Heart right ventricle (tissue), 16 donors: ENCODE measurements at regions of chr16 and their contacts with region 1.

Region 1: GRCh38 chr16:6232056-6232455 is 1100.6 kb upstream of the RBFOX1 start:
- DNase-seq: no peak
- ATAC-seq: no peak
- H3K4me3 ChIP-seq: no peak overlapping the region
- H3K27ac ChIP-seq: no peak overlapping the region
- H3K4me1 ChIP-seq: no peaks in the 10 kb centered on the region
- H3K27me3 ChIP-seq: no peaks in the 10 kb centered on the region
- CTCF ChIP-seq: no peak

Region 2: GRCh38 chr16:6206080-6206479 is 26.0 kb before region 1 on chr16:
- intact Hi-C with region 1: loop called in 1 of 10 experiments (anchors 1 kb)
- DNase-seq: no peak
- ATAC-seq: no peak
- H3K4me3 ChIP-seq: no peak overlapping the region
- H3K27ac ChIP-seq: no peak overlapping the region
- H3K4me1 ChIP-seq: no peaks in the 10 kb centered on the region
- H3K27me3 ChIP-seq: no peaks in the 10 kb centered on the region
- CTCF ChIP-seq: no peak